RWPE1 (cell line): ENCODE measurements at regions of chr1 and their contacts with region 1.

Region 1: GRCh38 chr1:204791453-204792353 is 79.0 kb upstream of the NFASC start:
- DNase-seq: peak; percentile 77
- H3K27ac ChIP-seq: no peak overlapping the region
- CTCF ChIP-seq: peak; percentile 54

Region 2: GRCh38 chr1:204572931-204573891 is 218.5 kb before region 1 on chr1:
- CTCF ChIA-PET with region 1: interaction called, 13 read pairs
- POLR2A ChIA-PET with region 1: no interaction called
- DNase-seq: peak; percentile 72
- H3K27ac ChIP-seq: no peak overlapping the region
- CTCF ChIP-seq: no peak

Region 3: GRCh38 chr1:204909109-204909508 is 117.4 kb after region 1 on chr1:
- CTCF ChIA-PET with region 1: no interaction called
- POLR2A ChIA-PET with region 1: no interaction called
- DNase-seq: no peak
- H3K27ac ChIP-seq: no peak overlapping the region
- CTCF ChIP-seq: no peak